ENCODE measurements at regions of chr11 and their contacts with region 1.

Region 1: GRCh38 chr11:66842896-66843775 is at the start of gene RCE1:
- DNase-seq: peak; percentile 90
- H3K4me3 Mint-ChIP-seq: peak within 1 kb of the TSS; percentile 90
- H3K27ac Mint-ChIP-seq: peak within 1 kb of the TSS; percentile 96
- H3K4me1 Mint-ChIP-seq: peaks cover 32% of the 10 kb centered on the region
- H3K27me3 Mint-ChIP-seq: no peaks in the 10 kb centered on the region
- total RNA-seq, gene RCE1: 30.9 and 34.4 TPM in 2 replicates

Region 2: GRCh38 chr11:66466225-66467027 is 376.7 kb before region 1 on chr11 and contains the start of gene PELI3:
- intact Hi-C with region 1: loop called (anchors 2 kb)
- DNase-seq: peak; percentile 86
- H3K4me3 Mint-ChIP-seq: peak within 1 kb of the TSS; percentile 94
- H3K27ac Mint-ChIP-seq: peak within 1 kb of the TSS; percentile 88
- H3K4me1 Mint-ChIP-seq: peaks cover 28% of the 10 kb centered on the region
- H3K27me3 Mint-ChIP-seq: no peaks in the 10 kb centered on the region
- total RNA-seq, gene PELI3: 15.3 and 15.8 TPM in 2 replicates

Region 3: DNA sequence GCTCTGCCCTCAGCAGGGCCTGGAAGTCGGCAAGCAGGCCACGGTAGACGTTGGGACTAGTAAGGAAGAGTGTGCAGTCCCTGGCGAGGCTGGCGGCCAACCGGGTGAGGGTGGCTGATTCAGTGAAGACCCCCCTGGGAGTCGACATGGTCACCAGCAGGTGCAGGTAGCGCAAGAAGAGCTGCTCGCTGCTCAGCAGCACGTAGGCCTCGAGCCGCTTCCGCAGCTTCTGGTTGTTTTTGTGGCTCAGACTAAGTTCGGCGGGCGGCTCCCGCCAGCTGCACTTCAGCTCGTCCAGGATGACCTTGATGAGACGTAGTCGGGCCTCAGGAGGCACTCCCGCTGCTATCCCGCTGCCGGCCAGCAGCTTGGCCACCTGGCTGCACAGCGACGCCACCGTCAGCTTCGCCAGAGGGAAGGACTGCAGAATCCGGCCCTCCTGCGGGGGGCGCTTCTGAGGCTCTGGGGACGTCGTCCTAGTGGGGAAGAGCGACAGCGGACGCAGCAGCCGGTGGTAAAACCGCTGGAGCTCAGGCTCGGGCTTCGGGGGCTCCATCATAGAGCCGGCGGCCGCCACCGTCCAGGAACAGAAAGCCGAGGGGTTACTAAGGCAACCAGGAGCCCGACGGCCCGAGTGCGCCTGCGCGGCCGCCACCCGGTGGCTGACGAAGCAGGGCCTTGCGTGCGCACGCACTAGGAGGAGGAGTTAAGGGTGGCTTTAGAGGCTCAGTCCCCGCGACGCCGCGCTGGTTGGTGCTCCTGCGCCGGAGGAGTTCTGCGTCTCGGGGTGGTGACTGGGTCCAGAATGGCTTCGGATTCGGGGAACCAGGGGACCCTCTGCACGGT is 250.5 kb before region 1 on chr11 and contains the starts of genes CCDC87 and CCS:
- intact Hi-C with region 1: loop called (anchors 2 kb)
- DNase-seq: peak; percentile 96
- H3K4me3 Mint-ChIP-seq: peak within 1 kb of the TSS; percentile 100
- H3K27ac Mint-ChIP-seq: peak within 1 kb of the TSS; percentile 97
- H3K4me1 Mint-ChIP-seq: peaks cover 30% of the 10 kb centered on the region
- H3K27me3 Mint-ChIP-seq: no peaks in the 10 kb centered on the region
- total RNA-seq, gene CCDC87: 0.29 and 0.37 TPM in 2 replicates
- total RNA-seq, gene CCS: 25.3 and 32.1 TPM in 2 replicates

Region 4: DNA sequence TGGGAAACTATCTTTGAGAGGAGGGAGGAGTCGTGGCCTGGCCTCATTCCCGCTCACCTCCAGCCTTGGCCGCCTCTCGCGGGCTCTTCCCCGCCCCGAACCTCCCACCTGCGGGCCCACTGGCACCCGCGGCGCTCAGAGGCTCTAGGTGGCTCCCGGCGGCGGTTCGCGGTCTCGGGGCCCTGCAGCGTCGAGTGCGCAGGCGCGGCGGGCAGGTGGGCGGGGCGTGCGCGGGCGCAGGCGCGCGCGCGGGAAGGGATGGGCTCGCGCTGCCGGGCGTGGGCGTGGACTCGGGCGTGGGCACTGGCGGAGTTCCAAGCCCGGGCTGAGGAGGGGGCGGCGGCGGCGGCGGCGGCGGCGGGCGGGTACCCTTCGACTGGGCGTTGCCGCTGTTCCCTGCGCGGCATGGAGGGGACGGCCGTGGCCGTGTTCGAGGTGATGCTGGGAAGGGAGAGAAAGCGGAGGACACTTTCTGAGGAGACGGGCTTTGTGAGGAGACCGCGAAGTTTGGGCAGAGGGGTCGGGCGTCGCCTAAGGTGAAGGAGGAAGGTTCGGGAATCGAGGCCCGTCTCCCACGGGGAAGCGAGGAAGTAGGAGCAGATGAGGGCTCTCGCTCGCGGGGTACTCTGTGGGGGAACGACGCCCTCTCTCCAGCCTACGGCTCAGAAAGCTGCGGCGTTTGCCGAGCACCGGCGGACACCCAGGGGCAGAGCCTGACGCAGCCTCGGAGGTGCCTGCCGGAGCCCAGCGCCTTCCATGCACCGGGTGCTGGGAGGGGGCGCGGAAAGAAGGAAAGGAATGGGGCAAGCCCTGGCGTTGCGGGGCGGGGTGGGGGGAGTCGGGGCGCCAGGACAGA is 98.4 kb before region 1 on chr11:
- intact Hi-C with region 1: loop called (anchors 1 kb)
- DNase-seq: peak; percentile 91
- H3K4me3 Mint-ChIP-seq: peak overlapping the region; percentile 90
- H3K27ac Mint-ChIP-seq: peak overlapping the region; percentile 80
- H3K4me1 Mint-ChIP-seq: no peaks in the 10 kb centered on the region
- H3K27me3 Mint-ChIP-seq: peaks cover 2% of the 10 kb centered on the region

Region 5: GRCh38 chr11:66868726-66869566 is 25.8 kb after region 1 on chr11:
- intact Hi-C with region 1: loop called (anchors 1 kb)
- DNase-seq: peak; percentile 69
- H3K4me3 Mint-ChIP-seq: no peak overlapping the region
- H3K27ac Mint-ChIP-seq: no peak overlapping the region
- H3K4me1 Mint-ChIP-seq: peaks cover 7% of the 10 kb centered on the region
- H3K27me3 Mint-ChIP-seq: peaks cover 1% of the 10 kb centered on the region

Region 6: GRCh38 chr11:67032830-67033555 is 189.9 kb after region 1 on chr11:
- intact Hi-C with region 1: no loop called
- DNase-seq: no peak
- H3K4me3 Mint-ChIP-seq: no peak overlapping the region
- H3K27ac Mint-ChIP-seq: no peak overlapping the region
- H3K4me1 Mint-ChIP-seq: no peaks in the 10 kb centered on the region
- H3K27me3 Mint-ChIP-seq: peaks cover 25% of the 10 kb centered on the region

Measured in activated T-helper 1 cell treated with anti-CD3 and anti-CD28 coated beads, Interleukin-12 subunit alpha, Interleukin-12 subunit beta, Interleukin-2, Interleukin-4 antibody, amounts not matched to agents 30 ng/mL and 10 ng/mL and 1 ng/mL, durations not matched to agents 14 hours and 24 hours and 36 hours (primary cell).